HepG2 (cell line): ENCODE measurements at regions of chr2 and their contacts with region 1.

Region 1: GRCh38 chr2:142415461-142415860 is 284.6 kb upstream of the LRP1B start:
- DNase-seq: peak; percentile 70
- ATAC-seq: peak; percentile 88
- H3K4me3 ChIP-seq: no peak overlapping the region
- H3K27ac ChIP-seq: no peak overlapping the region
- H3K4me1 ChIP-seq: peaks cover 14% of the 10 kb centered on the region
- H3K27me3 ChIP-seq: no peaks in the 10 kb centered on the region
- CTCF ChIP-seq: no peak
- EP300 ChIP-seq: no peak
- POLR2A ChIP-seq: no peak
- RAD21 ChIP-seq: no peak

Region 2: GRCh38 chr2:142280831-142281230 is 134.6 kb before region 1 on chr2:
- CTCF ChIA-PET with region 1: no interaction called
- POLR2A ChIA-PET with region 1: no interaction called
- in situ Hi-C with region 1: no loop called
- intact Hi-C with region 1: no loop called
- DNase-seq: no peak
- ATAC-seq: no peak
- H3K4me3 ChIP-seq: no peak overlapping the region
- H3K27ac ChIP-seq: no peak overlapping the region
- H3K4me1 ChIP-seq: no peaks in the 10 kb centered on the region
- H3K27me3 ChIP-seq: no peaks in the 10 kb centered on the region
- CTCF ChIP-seq: no peak
- EP300 ChIP-seq: no peak
- POLR2A ChIP-seq: no peak
- RAD21 ChIP-seq: no peak

Region 3: DNA sequence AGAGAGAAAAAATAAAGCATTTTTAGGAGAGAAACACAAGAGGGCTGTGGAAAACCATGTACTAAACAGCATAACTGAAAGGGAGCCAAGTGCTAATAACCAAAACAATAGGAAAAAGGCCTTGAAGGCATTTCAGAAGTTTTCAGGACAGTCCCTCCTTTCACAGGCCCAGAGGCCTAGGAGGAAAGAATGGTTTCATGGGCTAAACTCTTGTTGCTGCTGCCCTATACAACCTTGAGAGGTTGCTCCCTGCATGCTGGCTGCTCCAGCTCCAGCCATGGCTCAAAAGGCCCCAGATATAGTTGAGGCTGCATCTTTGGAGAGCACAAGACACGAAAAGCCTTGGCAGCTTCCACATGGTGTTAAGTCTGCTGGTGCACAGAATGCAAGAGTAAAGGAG is 17.2 kb before region 1 on chr2:
- CTCF ChIA-PET with region 1: no interaction called
- POLR2A ChIA-PET with region 1: no interaction called
- in situ Hi-C with region 1: no loop called
- intact Hi-C with region 1: loop called (anchors 1 kb)
- DNase-seq: no peak
- ATAC-seq: no peak
- H3K4me3 ChIP-seq: no peak overlapping the region
- H3K27ac ChIP-seq: no peak overlapping the region
- H3K4me1 ChIP-seq: no peaks in the 10 kb centered on the region
- H3K27me3 ChIP-seq: no peaks in the 10 kb centered on the region
- CTCF ChIP-seq: no peak
- EP300 ChIP-seq: no peak
- POLR2A ChIP-seq: no peak
- RAD21 ChIP-seq: no peak